ENCODE measurements at regions of chr5 and their contacts with region 1.

Region 1: DNA sequence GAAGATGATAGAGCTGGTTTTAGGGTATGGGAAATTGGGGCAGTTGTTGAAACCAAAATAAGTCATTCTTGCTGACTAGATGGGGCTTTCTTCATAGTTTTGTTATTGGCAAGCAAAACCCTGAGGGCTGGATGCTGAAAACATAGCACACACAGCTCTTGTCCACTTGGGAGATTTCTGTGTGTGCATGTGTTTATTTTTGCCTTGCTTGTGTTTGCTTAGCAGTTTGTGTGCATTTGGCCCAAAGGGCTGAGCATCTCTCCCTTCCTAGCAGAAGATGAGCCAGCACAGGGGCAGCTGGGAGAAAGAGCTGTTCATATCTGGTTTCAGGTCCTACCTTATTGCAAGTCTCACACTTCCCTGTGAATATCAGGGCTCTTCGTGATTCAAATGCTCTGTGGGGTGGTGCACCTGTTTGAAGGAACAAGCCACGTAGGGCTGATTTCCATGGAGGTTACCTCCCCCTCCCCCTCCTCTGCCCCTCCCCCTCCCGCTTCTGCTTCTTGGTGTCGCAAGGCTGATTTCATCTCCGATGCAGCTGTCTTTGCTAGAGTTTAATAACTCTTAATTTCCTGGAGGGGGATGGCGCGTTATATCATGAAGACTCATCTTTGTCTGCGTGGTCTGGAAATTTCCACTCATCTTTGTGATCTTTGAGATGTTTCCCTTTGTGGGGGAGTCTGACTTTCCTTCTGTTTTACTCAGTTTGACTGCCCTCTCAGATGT is 296.5 kb downstream of the ARHGAP26 start:
- DNase-seq: no peak
- H3K4me3 Mint-ChIP-seq: no peak overlapping the region
- H3K27ac Mint-ChIP-seq: no peak overlapping the region
- H3K4me1 Mint-ChIP-seq: peaks cover 32% of the 10 kb centered on the region
- H3K27me3 Mint-ChIP-seq: no peaks in the 10 kb centered on the region
- CTCF ChIP-seq: no peak

Region 2: DNA sequence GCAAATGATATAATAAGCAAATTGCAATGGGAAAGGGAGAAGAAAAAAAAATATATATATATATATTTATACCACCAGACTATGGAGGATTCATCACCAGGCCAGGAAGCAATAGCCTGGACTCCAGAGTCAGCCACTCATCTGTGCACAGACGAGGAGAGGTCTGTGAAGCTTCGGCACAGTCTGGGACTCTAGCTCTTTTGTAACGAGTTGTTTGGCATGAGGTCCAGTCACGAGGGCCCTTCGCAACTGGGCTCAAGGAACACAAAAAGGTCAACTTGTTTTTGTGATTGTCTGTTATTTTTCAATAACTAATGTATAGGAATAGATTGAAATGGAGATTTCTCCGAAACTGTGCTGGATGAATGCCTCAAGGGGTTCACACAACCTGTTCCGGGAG is 366.2 kb before region 1 on chr5:
- CTCF ChIA-PET with region 1: no interaction called
- POLR2A ChIA-PET with region 1: no interaction called
- intact Hi-C with region 1: no loop called
- DNase-seq: no peak
- H3K4me3 Mint-ChIP-seq: no peak overlapping the region
- H3K27ac Mint-ChIP-seq: no peak overlapping the region
- H3K4me1 Mint-ChIP-seq: peaks cover 14% of the 10 kb centered on the region
- H3K27me3 Mint-ChIP-seq: no peaks in the 10 kb centered on the region
- CTCF ChIP-seq: no peak

Region 3: DNA sequence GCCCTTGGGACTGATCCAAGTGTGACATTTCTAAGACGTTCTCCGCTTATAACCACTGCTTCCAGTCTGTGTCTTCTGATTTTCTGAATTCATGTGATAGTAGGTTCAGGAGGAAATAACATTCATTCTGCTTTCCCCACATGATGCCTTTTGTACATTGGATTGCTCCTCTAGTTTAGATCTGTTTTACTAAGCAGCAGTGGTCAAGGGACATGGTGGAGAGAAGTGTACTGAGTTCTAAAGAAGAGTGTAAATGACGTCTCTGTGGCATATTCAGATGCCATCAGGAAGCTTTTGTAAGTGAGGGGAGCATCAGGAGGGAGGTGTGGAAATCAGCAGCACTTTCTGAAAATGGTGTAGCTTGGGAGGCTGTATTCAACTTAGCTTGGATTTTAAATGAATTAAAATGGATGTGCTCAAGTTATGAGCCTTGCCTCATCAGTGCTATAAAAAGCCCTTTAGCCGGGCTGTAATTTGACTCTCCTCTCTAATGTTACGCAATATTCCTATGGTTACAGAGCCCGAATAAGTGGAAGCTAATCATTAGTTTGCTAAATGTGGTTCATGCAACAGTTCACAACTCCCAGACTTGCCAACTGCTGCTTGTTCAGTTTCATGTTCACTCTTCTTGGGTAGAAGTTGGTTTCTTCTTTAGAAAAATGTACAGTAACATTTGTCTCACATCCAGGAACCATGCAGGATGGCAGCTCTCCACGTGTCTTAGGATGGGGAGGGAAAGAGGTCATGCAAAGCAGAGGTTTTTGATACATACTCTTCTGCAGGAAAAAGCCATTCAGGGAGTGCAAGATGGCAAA is 15.3 kb before region 1 on chr5:
- CTCF ChIA-PET with region 1: interaction called, 5 read pairs
- POLR2A ChIA-PET with region 1: interaction called, 33 read pairs
- intact Hi-C with region 1: no loop called
- DNase-seq: peak; percentile 90
- H3K4me3 Mint-ChIP-seq: no peak overlapping the region
- H3K27ac Mint-ChIP-seq: no peak overlapping the region
- H3K4me1 Mint-ChIP-seq: peaks cover 33% of the 10 kb centered on the region
- H3K27me3 Mint-ChIP-seq: no peaks in the 10 kb centered on the region
- CTCF ChIP-seq: no peak

Region 4: GRCh38 chr5:143119881-143120341 is 53.2 kb after region 1 on chr5:
- CTCF ChIA-PET with region 1: no interaction called
- POLR2A ChIA-PET with region 1: no interaction called
- intact Hi-C with region 1: no loop called
- DNase-seq: no peak
- H3K4me3 Mint-ChIP-seq: no peak overlapping the region
- H3K27ac Mint-ChIP-seq: no peak overlapping the region
- H3K4me1 Mint-ChIP-seq: no peaks in the 10 kb centered on the region
- H3K27me3 Mint-ChIP-seq: no peaks in the 10 kb centered on the region
- CTCF ChIP-seq: no peak